Gastrocnemius medialis (tissue), 4 donors: ENCODE measurements at regions of chr17 and their contacts with region 1.

Region 1: DNA sequence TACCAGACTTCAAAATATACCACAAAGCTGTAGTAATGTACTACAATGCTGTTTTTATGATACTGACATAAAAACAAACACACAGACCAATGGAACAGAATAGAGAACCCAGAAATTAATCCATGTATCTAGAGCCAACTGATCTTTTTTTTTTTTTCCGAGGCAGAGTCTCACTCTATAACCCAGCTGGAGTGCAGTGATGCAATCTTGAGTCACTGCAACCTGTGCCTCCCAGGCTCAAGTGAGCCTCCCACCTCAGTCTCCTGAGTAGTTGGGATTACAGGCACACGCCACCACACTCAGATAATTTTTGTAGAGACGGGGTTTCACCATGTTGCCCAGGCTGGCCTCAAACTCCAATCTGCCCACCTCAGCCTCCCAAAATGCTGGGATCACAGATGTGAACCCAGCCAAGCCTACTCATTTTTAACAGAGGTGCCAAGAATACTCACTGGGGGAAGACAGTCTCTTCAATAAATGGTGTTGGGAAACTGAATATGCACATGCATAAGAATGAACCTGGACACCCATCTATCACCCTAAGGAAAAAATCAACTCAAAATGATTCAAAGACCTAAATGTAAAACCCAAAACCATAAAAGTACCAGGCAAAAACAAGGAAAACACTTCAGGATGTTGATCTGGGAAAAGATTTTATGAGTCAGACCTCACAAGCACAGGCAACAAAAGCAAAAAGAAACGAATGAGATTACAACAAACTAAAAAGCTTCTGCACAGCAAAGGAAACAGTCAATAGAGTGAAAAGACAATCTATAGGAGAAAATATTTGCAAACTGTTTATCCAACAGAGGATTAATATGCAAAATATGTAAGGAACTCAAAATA is 63.1 kb downstream of the STX8 start:
- DNase-seq: no peak
- ATAC-seq: no peak
- H3K4me3 ChIP-seq: no peak overlapping the region
- H3K27ac ChIP-seq: no peak overlapping the region
- H3K4me1 ChIP-seq: no peaks in the 10 kb centered on the region
- H3K27me3 ChIP-seq: no peaks in the 10 kb centered on the region
- CTCF ChIP-seq: no peak
- POLR2A ChIP-seq: no peak

Region 2: GRCh38 chr17:8986290-8986689 is 526.3 kb before region 1 on chr17:
- in situ Hi-C with region 1: loop called in 1 of 4 experiments (anchors 10 kb)
- intact Hi-C with region 1: no loop called
- DNase-seq: no peak
- ATAC-seq: no peak
- H3K4me3 ChIP-seq: no peak overlapping the region
- H3K27ac ChIP-seq: no peak overlapping the region
- H3K4me1 ChIP-seq: no peaks in the 10 kb centered on the region
- H3K27me3 ChIP-seq: no peaks in the 10 kb centered on the region
- CTCF ChIP-seq: no peak
- POLR2A ChIP-seq: no peak

Region 3: DNA sequence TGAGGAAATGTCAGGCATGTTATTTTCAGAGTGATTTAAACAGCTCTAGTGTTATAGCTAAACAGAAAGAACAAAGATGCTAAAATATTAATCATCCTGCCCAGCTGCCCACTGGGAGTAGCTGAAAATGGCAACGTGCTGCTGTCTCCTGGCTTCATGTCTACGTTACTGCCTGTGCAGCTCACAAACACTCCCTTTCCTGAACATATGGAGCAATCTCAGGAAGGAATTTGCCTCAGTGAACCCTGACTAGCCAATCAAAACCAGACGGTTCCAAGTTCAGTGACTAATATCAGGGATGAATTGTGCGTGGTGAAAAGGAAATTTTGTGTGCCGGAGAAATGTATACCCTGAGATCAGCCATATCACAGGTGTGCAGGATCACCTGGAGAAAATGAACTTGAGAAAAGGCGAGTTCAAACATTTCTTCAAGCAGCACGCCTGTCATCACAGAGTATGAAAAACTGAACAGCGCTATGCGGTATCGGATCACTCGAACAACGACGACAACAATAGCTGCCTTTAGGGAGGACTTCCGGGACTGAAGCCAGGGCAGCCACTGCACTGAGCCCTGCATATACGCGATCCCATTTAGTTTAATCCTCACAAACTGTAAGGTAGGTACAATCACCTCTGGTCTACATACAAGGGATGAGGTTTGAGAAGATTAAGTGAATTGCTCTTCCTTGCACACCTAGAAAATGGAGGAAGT is 47.2 kb before region 1 on chr17:
- in situ Hi-C with region 1: loop called in 1 of 4 experiments (anchors 10 kb)
- intact Hi-C with region 1: no loop called
- DNase-seq: no peak
- ATAC-seq: no peak
- H3K4me3 ChIP-seq: no peak overlapping the region
- H3K27ac ChIP-seq: no peak overlapping the region
- H3K4me1 ChIP-seq: peaks cover 13 to 22% of the 10 kb centered on the region in 2 donors
- H3K27me3 ChIP-seq: no peaks in the 10 kb centered on the region
- CTCF ChIP-seq: no peak
- POLR2A ChIP-seq: no peak